ENCODE measurements at regions of chr1 and their contacts with region 1.

Region 1: DNA sequence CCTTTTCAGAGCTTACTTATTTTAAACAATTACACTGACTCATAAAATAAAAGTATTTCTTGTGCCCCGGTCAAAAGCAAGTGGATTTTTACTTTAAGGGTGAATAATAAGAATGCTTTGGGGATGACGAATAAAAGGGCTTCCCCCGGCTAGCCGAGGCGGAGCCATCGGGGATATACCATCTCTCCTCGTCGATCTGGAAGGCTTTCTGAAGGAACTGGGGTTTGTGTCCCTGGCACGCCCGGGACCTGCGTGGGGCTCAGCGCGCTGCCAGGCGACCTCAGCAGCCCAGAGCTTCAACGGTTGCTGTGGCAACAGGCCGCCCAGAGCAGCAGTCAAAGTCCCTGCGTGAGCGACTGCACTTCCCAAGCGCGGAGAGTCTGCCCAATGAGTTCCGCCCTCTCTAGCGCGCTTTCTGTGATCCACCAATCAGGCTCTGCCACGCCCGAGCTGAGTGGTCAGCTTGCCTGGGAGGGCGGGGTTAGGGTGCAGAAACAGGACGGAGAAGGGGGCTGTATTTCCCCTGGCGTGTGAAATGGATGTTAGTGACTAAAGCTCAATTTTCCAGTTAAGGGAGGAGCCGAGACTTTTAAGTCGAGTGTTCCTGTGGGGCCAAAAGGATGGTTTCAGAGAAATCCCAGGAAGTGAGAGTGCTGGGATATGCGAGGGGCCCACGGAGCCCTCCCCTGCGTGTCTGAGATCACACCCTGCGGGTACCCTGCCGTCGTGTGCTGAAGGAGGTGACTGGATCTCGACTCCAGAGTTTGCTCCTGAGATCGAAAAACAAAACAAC is 33.0 kb upstream of the MGST3 start:
- DNase-seq: peak; percentile 93 to 97
- H3K4me3 ChIP-seq: peak overlapping the region; percentile 47 to 73 (median 61)
- H3K27ac ChIP-seq: peak overlapping the region; percentile 71 to 77
- H3K4me1 ChIP-seq: no peaks in the 10 kb centered on the region
- H3K27me3 ChIP-seq: peaks cover 0 to 9% of the 10 kb centered on the region in 2 donors
- CTCF ChIP-seq: no peak
- POLR2A ChIP-seq: no peak

Region 2: GRCh38 chr1:165403835-165404482 is 194.1 kb before region 1 on chr1:
- intact Hi-C with region 1: loop called (anchors 10 kb)
- DNase-seq: no peak
- H3K4me3 ChIP-seq: no peak overlapping the region
- H3K27ac ChIP-seq: no peak overlapping the region
- H3K4me1 ChIP-seq: no peaks in the 10 kb centered on the region
- H3K27me3 ChIP-seq: peaks cover 0 to 4% of the 10 kb centered on the region in 2 donors
- CTCF ChIP-seq: peak in 2 of 3 donors; percentile 36 to 49
- POLR2A ChIP-seq: no peak